PC-9 (cell line): ENCODE measurements at regions of chr11 and their contacts with region 1.

Region 1: DNA sequence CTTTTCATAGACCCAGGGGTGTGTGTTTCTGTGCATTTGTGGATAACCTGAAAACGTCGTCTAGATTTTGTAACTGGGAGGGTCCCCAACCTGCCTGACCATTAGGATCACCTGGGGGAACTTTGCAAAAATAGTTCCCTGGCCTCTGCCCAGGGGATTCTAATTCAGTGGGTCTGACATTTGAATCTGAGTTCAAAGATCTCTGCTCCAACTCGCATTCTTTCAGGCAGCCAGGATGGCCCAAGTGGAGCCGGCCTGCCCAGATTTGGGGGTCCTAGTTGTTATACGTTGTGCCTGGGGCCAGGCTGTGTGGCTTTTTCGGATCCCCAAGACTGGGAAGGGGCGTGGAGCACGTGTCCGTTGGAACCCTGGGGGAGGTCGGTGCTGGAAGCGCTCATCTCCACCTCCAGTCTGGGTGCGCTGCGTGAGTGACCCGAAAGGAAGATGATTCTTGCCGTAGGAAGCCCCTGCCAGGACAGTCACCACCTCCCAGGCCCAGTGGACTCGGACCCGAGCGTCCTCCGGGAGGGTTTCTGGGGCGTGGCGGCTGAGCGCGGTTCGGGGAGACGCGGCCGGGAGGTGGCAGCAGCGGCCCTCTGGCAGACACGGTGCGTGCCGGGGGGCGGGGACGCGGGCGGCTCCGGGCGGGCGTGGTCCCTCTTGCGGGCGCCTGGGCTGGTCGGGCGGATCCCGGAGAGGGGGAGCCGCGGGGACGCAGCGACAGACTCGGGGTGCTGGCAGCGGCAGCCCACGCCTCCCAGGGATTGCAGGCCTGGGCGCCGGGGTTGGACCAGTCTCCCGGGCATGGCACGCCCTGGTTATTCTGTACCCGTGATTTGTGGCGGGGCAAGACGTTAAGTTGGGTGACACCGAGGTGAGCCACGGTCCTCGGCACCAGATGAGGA is 29.2 kb upstream of the PLET1 start:
- DNase-seq: peak; percentile 46 to 80
- H3K4me3 ChIP-seq: peak overlapping the region; percentile 65
- H3K27ac ChIP-seq: no peak overlapping the region
- H3K4me1 ChIP-seq: peaks cover 27% of the 10 kb centered on the region
- H3K27me3 ChIP-seq: no peaks in the 10 kb centered on the region
- CTCF ChIP-seq: peak; percentile 79

Region 2: GRCh38 chr11:112185883-112186282 is 104.0 kb before region 1 on chr11:
- CTCF ChIA-PET with region 1: no interaction called
- POLR2A ChIA-PET with region 1: no interaction called
- intact Hi-C with region 1: no loop called
- DNase-seq: peak in 1 of 2 experiments; percentile 26
- H3K4me3 ChIP-seq: no peak overlapping the region
- H3K27ac ChIP-seq: no peak overlapping the region
- H3K4me1 ChIP-seq: peaks cover 6% of the 10 kb centered on the region; the same call in 1 of the 2 replicates
- H3K27me3 ChIP-seq: no peaks in the 10 kb centered on the region
- CTCF ChIP-seq: no peak

Region 3: GRCh38 chr11:112321521-112322172 is 31.8 kb after region 1 on chr11:
- CTCF ChIA-PET with region 1: no interaction called
- POLR2A ChIA-PET with region 1: no interaction called
- intact Hi-C with region 1: loop called (anchors 2 kb)
- DNase-seq: peak; percentile 80 to 98
- H3K4me3 ChIP-seq: no peak overlapping the region
- H3K27ac ChIP-seq: peak overlapping the region; percentile 78
- H3K4me1 ChIP-seq: peaks cover 46% of the 10 kb centered on the region
- H3K27me3 ChIP-seq: no peaks in the 10 kb centered on the region
- CTCF ChIP-seq: no peak

Region 4: GRCh38 chr11:112382561-112382960 is 92.7 kb after region 1 on chr11:
- CTCF ChIA-PET with region 1: no interaction called
- POLR2A ChIA-PET with region 1: no interaction called
- intact Hi-C with region 1: loop called (anchors 5 kb)
- DNase-seq: no peak
- H3K4me3 ChIP-seq: no peak overlapping the region
- H3K27ac ChIP-seq: no peak overlapping the region
- H3K4me1 ChIP-seq: no peaks in the 10 kb centered on the region
- H3K27me3 ChIP-seq: no peaks in the 10 kb centered on the region
- CTCF ChIP-seq: no peak

Region 5: GRCh38 chr11:112440518-112440917 is 150.7 kb after region 1 on chr11:
- CTCF ChIA-PET with region 1: no interaction called
- POLR2A ChIA-PET with region 1: no interaction called
- intact Hi-C with region 1: no loop called
- DNase-seq: no peak
- H3K4me3 ChIP-seq: no peak overlapping the region
- H3K27ac ChIP-seq: no peak overlapping the region
- H3K4me1 ChIP-seq: no peaks in the 10 kb centered on the region
- H3K27me3 ChIP-seq: no peaks in the 10 kb centered on the region
- CTCF ChIP-seq: no peak

Region 6: DNA sequence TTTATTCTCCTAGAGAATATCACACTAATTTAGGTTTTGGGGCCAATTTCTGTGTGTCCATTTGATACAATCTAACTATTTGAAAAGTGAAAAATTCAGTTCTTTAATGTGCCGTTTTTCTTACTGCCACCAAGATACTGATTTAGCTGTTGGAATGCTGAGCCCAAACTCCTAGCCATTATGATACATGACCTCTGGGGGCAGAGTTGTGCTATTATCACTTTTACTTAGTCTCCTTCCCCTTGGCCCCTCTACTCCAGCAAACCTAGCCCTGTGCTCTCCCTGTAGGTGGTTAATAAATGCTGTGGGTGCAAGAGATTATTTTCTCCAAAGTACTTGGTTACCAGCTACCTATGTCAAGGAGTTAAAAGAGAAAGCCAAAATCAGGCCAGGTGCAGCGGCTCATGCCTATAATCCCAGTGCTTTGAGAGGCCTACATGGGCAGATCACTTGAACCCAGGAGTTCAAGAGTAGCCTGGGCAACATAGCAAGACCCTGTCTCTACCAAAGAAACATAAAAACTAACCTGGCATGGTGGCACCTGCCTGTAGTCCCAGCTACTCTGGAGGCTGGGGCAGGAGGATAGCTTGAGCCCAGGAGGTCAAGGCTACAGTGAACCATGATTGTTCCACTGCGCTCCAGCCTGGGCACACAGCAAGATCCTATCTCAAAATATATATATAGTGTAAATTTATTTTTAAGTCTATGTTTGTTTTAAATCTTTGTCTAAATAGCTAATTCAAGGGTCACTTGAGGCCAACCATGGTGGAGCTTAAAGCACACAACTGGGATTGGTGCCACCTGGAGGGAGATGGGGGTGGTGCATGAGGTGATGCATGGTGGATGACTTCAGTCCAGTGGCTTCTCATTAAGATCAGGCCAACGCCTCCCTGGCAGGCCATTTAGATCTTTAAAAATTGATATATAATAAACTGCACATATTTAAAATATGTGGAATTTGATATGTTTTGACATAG is 164.0 kb after region 1 on chr11:
- CTCF ChIA-PET with region 1: no interaction called
- POLR2A ChIA-PET with region 1: no interaction called
- intact Hi-C with region 1: loop called (anchors 1 kb)
- DNase-seq: peak in 1 of 2 experiments; percentile 14
- H3K4me3 ChIP-seq: no peak overlapping the region
- H3K27ac ChIP-seq: no peak overlapping the region
- H3K4me1 ChIP-seq: 0 out of 2 replicates have a peak, but pooled peaks cover 6% of the 10 kb centered on the region
- H3K27me3 ChIP-seq: no peaks in the 10 kb centered on the region
- CTCF ChIP-seq: peak; percentile 60

Region 7: GRCh38 chr11:112470355-112470754 is 180.5 kb after region 1 on chr11:
- CTCF ChIA-PET with region 1: no interaction called
- POLR2A ChIA-PET with region 1: no interaction called
- intact Hi-C with region 1: no loop called
- DNase-seq: peak in 1 of 2 experiments; percentile 36
- H3K4me3 ChIP-seq: no peak overlapping the region
- H3K27ac ChIP-seq: no peak overlapping the region
- H3K4me1 ChIP-seq: peaks cover 10% of the 10 kb centered on the region
- H3K27me3 ChIP-seq: no peaks in the 10 kb centered on the region
- CTCF ChIP-seq: no peak

Region 8: GRCh38 chr11:112555491-112556364 is 265.9 kb after region 1 on chr11:
- CTCF ChIA-PET with region 1: no interaction called
- POLR2A ChIA-PET with region 1: no interaction called
- intact Hi-C with region 1: loop called (anchors 10 kb)
- DNase-seq: no peak
- H3K4me3 ChIP-seq: no peak overlapping the region
- H3K27ac ChIP-seq: no peak overlapping the region
- H3K4me1 ChIP-seq: peaks cover 21% of the 10 kb centered on the region
- H3K27me3 ChIP-seq: no peaks in the 10 kb centered on the region
- CTCF ChIP-seq: peak; percentile 72

Region 9: DNA sequence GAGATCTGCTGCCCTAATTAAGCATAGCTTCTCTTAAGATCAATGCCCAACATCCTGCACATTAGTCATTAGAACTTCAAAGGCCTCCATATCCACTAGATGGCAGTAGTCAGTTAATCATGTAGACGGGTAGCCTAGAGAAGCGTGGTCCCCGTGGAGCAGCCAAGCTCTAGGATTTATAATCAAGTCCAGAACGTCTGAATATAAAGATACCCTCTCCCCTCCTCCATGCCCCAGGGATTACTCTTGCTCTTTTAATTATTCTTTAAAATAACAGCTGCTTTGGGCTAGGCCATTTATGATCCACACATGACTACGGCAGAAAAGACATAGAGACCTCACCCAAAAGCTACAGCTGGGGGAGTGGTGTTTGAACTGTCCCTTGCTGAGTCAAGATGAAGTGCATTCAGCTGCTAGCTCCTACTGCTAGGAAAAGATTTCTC is 298.4 kb after region 1 on chr11:
- CTCF ChIA-PET with region 1: no interaction called
- POLR2A ChIA-PET with region 1: no interaction called
- intact Hi-C with region 1: loop called (anchors 1 kb)
- DNase-seq: peak; percentile 20 to 76
- H3K4me3 ChIP-seq: no peak overlapping the region
- H3K27ac ChIP-seq: no peak overlapping the region
- H3K4me1 ChIP-seq: peaks cover 5% of the 10 kb centered on the region; the same call in 1 of the 2 replicates
- H3K27me3 ChIP-seq: no peaks in the 10 kb centered on the region
- CTCF ChIP-seq: peak; percentile 91

Region 10: DNA sequence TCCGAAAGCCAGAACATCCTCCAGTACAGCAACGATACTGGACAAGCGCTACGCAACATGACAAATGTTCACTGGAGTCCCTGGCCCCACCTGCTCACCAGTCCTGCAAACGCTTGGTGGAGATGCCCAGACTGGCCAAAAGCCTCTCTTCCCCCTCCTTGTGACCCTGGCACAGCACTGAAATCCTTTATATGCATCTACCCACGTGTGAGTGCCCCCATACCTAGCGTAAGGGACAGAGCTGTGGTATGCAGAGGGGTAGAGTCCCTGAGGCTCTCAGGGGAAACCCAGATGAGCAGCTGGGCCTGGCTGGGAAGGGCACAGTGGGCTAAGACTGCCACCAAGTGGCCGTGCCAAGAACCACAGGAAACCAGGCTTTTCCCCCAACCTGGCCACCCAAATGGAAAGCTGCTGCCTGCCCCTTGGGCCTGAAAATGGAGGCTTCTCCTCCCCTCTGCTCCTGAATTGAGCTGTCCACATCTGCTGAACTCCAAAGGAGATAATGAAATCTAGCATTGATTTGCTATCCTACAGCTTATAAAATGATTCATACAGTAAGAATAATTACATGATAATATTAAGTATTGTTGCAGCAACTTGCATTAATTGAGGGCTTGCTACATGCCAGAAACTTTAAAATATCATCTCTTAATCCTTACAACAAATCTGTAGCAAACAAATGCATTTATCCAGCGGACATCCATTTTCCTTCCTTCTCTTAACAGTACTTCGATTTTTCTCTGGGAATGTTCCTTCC is 999.8 kb after region 1 on chr11:
- CTCF ChIA-PET with region 1: no interaction called
- POLR2A ChIA-PET with region 1: no interaction called
- intact Hi-C with region 1: loop called (anchors 1 kb)
- DNase-seq: peak in 1 of 2 experiments; percentile 55
- H3K4me3 ChIP-seq: no peak overlapping the region
- H3K27ac ChIP-seq: no peak overlapping the region
- H3K4me1 ChIP-seq: peaks cover 15% of the 10 kb centered on the region
- H3K27me3 ChIP-seq: no peaks in the 10 kb centered on the region; the same call in none of the 2 replicates
- CTCF ChIP-seq: peak; percentile 98